IMR-90 (cell line): ENCODE measurements at regions of chr15 and their contacts with region 1.

Region 1: DNA sequence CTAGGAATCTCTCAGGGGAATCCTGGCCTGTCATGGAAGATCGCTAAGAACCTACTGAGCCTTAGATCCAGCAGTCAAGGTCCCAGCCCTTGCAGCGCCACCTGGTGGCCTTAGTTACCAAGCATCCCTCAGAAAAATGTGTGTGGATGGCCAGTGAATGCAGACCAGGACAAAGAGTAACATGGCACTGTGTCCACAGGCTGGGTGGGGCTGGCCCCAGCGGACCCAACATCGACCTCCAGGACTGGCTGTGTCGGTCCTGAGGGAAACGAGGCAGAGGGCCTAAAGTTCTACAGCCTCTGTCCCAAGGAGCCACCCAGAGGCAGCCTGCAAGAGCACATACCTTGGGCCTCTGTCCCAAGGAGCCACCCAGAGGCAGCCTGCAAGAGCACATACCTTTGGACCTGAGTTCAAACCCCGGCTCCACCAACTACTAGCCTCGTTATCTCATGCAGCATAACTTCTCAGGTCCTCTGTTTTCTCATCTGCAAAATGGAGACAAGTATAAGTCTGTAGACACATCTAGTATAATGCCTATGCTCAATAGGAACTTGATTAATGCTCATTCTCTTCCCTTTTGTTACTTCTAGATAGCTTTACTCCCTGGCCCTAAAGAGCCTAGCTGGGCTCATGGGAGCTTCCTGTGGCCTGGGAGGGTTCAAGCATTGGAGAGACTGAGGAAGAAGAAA is 57.5 kb upstream of the HERC1 start:
- DNase-seq: peak; percentile 67
- ATAC-seq: peak; percentile 98
- H3K4me3 ChIP-seq: no peak overlapping the region
- H3K27ac ChIP-seq: no peak overlapping the region
- H3K4me1 ChIP-seq: peaks cover 2% of the 10 kb centered on the region; the same call in 1 of the 2 replicates
- H3K27me3 ChIP-seq: peaks cover 14% of the 10 kb centered on the region
- CTCF ChIP-seq: peak; percentile 85
- POLR2A ChIP-seq: no peak
- RAD21 ChIP-seq: peak; percentile 81

Region 2: GRCh38 chr15:63610200-63610841 is 280.9 kb before region 1 on chr15:
- CTCF ChIA-PET with region 1: no interaction called
- POLR2A ChIA-PET with region 1: no interaction called
- dilution Hi-C with region 1: no loop called
- in situ Hi-C with region 1: no loop called
- intact Hi-C with region 1: loop called (anchors 5 kb)
- DNase-seq: peak; percentile 82
- ATAC-seq: peak; percentile 98
- H3K4me3 ChIP-seq: no peak overlapping the region
- H3K27ac ChIP-seq: peak overlapping the region; percentile 23; the same call in 1 of the 2 replicates
- H3K4me1 ChIP-seq: peaks cover 5% of the 10 kb centered on the region; the same call in 1 of the 2 replicates
- H3K27me3 ChIP-seq: no peaks in the 10 kb centered on the region
- CTCF ChIP-seq: peak; percentile 86
- POLR2A ChIP-seq: no peak
- RAD21 ChIP-seq: peak; percentile 83

Region 3: GRCh38 chr15:63752075-63752684 is 139.0 kb before region 1 on chr15:
- CTCF ChIA-PET with region 1: interaction called, 3 read pairs
- POLR2A ChIA-PET with region 1: no interaction called
- dilution Hi-C with region 1: no loop called
- in situ Hi-C with region 1: loop called (anchors 5 kb)
- intact Hi-C with region 1: loop called (anchors 1 kb)
- DNase-seq: peak; percentile 65
- ATAC-seq: peak; percentile 84
- H3K4me3 ChIP-seq: no peak overlapping the region
- H3K27ac ChIP-seq: no peak overlapping the region
- H3K4me1 ChIP-seq: no peaks in the 10 kb centered on the region; the same call in 1 of the 2 replicates
- H3K27me3 ChIP-seq: no peaks in the 10 kb centered on the region
- CTCF ChIP-seq: peak; percentile 77
- POLR2A ChIP-seq: no peak
- RAD21 ChIP-seq: peak; percentile 79

Region 4: GRCh38 chr15:63833021-63833696 is 58.1 kb before region 1 on chr15:
- CTCF ChIA-PET with region 1: interaction called, 4 read pairs
- POLR2A ChIA-PET with region 1: no interaction called
- dilution Hi-C with region 1: no loop called
- in situ Hi-C with region 1: no loop called
- intact Hi-C with region 1: loop called (anchors 5 kb)
- DNase-seq: peak; percentile 36
- ATAC-seq: peak; percentile 77
- H3K4me3 ChIP-seq: peak overlapping the region; percentile 77
- H3K27ac ChIP-seq: peak overlapping the region; percentile 68
- H3K4me1 ChIP-seq: peaks cover 2% of the 10 kb centered on the region; the same call in 1 of the 2 replicates
- H3K27me3 ChIP-seq: no peaks in the 10 kb centered on the region
- CTCF ChIP-seq: 0 out of 2 replicates have a peak, but pooled peaks have one; percentile 0
- POLR2A ChIP-seq: no peak
- RAD21 ChIP-seq: no peak

Region 5: DNA sequence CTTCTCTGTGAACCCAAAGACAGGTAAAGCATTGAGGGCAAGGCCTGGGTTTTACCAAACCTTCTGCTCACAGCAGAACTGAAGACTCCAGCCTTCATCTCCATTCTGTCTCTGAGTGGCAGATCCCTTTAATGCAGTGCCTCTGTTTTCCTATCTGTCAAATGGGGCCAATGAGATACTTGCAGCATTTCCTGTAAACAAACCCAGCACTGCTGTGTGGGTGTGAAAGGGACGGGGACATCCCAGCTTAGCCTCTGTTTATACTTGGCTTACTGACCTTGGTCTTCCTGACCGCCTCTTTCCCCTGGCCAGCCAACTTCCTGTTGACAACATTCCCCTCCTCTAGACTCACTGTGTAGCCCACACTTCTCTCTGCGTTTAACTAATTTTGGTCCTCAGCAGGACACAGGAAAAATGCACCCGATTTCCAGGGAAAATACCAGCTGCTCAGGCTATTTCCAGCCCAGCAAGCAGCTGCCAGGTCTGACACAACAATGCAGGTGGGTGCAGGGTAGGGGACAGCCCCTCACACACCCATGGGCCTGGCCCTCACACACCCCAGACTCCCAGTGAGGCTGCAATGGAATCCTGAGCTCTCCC is 48.4 kb after region 1 on chr15:
- CTCF ChIA-PET with region 1: no interaction called
- POLR2A ChIA-PET with region 1: no interaction called
- dilution Hi-C with region 1: no loop called
- in situ Hi-C with region 1: loop called (anchors 5 kb)
- intact Hi-C with region 1: no loop called
- DNase-seq: peak; percentile 75
- ATAC-seq: peak; percentile 90
- H3K4me3 ChIP-seq: no peak overlapping the region
- H3K27ac ChIP-seq: peak overlapping the region; percentile 42
- H3K4me1 ChIP-seq: peaks cover 13% of the 10 kb centered on the region
- H3K27me3 ChIP-seq: no peaks in the 10 kb centered on the region
- CTCF ChIP-seq: no peak
- POLR2A ChIP-seq: no peak
- RAD21 ChIP-seq: no peak

Region 6: GRCh38 chr15:64046347-64047153 is 155.3 kb after region 1 on chr15 and contains the start of gene DAPK2:
- CTCF ChIA-PET with region 1: interaction called, 3 read pairs
- POLR2A ChIA-PET with region 1: no interaction called
- dilution Hi-C with region 1: no loop called
- in situ Hi-C with region 1: no loop called
- intact Hi-C with region 1: loop called (anchors 1 kb)
- DNase-seq: peak; percentile 34
- ATAC-seq: peak; percentile 99
- H3K4me3 ChIP-seq: peak within 1 kb of the TSS; percentile 44
- H3K27ac ChIP-seq: no peak within 1 kb of the TSS
- H3K4me1 ChIP-seq: peaks cover 1% of the 10 kb centered on the region; the same call in 1 of the 2 replicates
- H3K27me3 ChIP-seq: peaks cover 40% of the 10 kb centered on the region
- CTCF ChIP-seq: peak; percentile 78
- POLR2A ChIP-seq: no peak
- RAD21 ChIP-seq: peak; percentile 68
- total RNA-seq, gene DAPK2: 0.28 and 0.36 TPM in 2 replicates

Region 7: DNA sequence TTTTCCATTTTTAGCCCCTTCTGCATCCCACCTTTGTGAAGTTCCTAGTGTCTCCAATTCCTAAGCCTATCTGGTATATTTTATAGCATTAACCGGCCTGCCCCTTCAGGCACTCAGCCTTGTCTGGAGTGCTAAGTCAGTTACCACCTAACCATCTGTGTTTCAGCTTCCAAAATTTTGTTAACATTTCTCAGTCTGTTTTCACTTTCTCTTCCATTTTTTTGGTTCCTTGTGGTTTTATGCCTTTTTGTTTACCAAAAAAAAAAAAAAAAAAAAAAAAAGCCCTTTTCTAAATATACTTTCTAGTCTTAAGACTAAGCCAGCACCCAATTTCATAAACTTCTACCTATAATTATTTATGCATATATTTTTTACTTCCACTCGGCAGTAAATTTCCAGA is 372.3 kb after region 1 on chr15:
- CTCF ChIA-PET with region 1: no interaction called
- POLR2A ChIA-PET with region 1: no interaction called
- dilution Hi-C with region 1: no loop called
- in situ Hi-C with region 1: no loop called
- intact Hi-C with region 1: no loop called
- DNase-seq: no peak
- ATAC-seq: no peak
- H3K4me3 ChIP-seq: no peak overlapping the region
- H3K27ac ChIP-seq: no peak overlapping the region
- H3K4me1 ChIP-seq: no peaks in the 10 kb centered on the region
- H3K27me3 ChIP-seq: no peaks in the 10 kb centered on the region
- CTCF ChIP-seq: no peak
- POLR2A ChIP-seq: no peak
- RAD21 ChIP-seq: no peak